Lower leg skin (tissue), 4 donors: ENCODE measurements at regions of chr3 and their contacts with region 1.

Region 1: DNA sequence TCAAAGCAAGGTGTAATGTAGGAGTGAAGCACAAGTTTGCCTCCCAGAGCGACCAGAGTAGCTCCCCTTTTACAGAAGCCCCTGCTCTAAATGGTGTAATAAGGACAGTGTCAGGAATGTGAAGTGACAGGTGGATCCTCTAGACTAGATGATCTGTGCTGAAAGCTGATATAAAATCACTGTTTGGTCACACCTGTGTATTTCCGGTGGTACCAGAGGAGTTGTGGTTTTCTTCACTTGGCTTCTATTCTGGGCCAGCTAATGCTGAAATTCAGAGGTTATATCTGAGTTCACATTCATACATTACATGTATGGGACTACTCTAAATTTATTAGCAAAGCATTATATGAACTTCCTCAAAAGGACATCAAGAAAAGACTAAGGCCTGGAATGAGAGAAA is 117.4 kb downstream of the IL1RAP start:
- DNase-seq: no peak
- H3K4me3 ChIP-seq: no peak overlapping the region
- CTCF ChIP-seq: no peak
- POLR2A ChIP-seq: no peak

Region 2: GRCh38 chr3:190596349-190597285 is 34.7 kb before region 1 on chr3:
- intact Hi-C with region 1: no loop called
- DNase-seq: no peak
- H3K4me3 ChIP-seq: no peak overlapping the region
- CTCF ChIP-seq: no peak
- POLR2A ChIP-seq: no peak

Region 3: DNA sequence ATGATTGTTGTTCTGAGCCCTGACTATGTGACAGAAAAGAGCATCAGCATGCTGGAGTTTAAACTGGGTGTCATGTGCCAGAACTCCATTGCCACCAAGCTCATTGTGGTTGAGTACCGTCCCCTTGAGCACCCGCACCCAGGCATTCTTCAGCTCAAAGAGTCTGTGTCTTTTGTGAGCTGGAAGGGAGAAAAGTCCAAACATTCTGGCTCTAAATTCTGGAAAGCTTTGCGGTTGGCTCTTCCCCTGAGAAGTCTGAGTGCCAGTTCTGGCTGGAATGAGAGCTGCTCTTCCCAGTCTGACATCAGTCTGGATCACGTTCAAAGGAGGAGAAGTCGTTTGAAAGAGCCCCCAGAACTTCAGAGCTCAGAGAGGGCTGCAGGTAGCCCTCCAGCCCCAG is 24.6 kb after region 1 on chr3:
- intact Hi-C with region 1: loop called (anchors 1 kb)
- DNase-seq: no peak
- H3K4me3 ChIP-seq: no peak overlapping the region
- CTCF ChIP-seq: no peak
- POLR2A ChIP-seq: no peak

Region 4: GRCh38 chr3:191859531-191859930 is 1228.2 kb after region 1 on chr3:
- intact Hi-C with region 1: no loop called
- DNase-seq: no peak
- H3K4me3 ChIP-seq: no peak overlapping the region
- CTCF ChIP-seq: no peak
- POLR2A ChIP-seq: no peak